ENCODE measurements at regions of chr20 and their contacts with region 1.

Region 1: DNA sequence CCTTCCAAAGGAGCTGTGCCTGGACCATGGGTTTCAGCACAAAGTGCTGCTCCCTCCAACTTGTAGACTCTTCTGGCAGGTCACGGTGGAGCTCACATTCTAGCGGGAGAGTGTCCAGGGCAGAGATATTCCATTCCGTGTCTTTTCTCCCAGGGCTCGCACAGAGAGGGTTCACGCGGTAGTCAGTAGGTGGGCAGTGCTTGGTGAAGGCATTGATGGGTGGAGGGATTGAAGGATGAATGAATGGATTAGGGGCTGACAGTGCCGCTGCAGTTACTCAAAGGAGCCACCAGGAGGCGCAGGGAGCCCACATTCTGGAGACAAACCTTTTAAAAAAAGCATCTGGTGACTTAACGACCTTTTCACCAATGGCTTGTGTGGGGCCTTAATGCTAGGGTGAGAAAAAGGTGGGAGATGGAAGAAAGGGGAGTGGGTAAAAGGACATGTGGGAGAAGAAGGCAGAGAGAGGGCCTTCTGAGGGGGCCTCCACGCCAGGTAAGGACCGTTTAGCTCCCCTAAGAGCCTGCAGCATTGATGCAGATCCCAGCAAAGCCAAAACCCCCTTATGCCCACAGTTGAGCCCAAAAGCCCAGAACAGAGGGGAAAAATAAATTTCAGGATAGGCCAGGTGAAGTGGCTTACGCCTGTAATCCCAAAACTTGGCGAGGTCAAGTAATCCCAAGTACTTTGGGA is 17.5 kb upstream of the FAM110A start:
- DNase-seq: peak; percentile 76 to 84
- ATAC-seq: peak; percentile 48 to 76; a peak in 4 of 6 replicates
- H3K4me3 ChIP-seq: no peak overlapping the region
- H3K27ac ChIP-seq: no peak overlapping the region
- H3K4me1 ChIP-seq: no peaks in the 10 kb centered on the region
- CTCF ChIP-seq: peak; percentile 98
- EP300 ChIP-seq: no peak
- POLR2A ChIP-seq: no peak
- RAD21 ChIP-seq: peak; percentile 97 to 98

Region 2: GRCh38 chr20:588932-589672 is 227.0 kb before region 1 on chr20:
- CTCF ChIA-PET with region 1: no interaction called
- POLR2A ChIA-PET with region 1: no interaction called
- DNase-seq: peak in 1 of 2 experiments; percentile 41
- ATAC-seq: peak; percentile 60 to 78; a peak in 4 of 6 replicates
- H3K4me3 ChIP-seq: no peak overlapping the region
- H3K27ac ChIP-seq: no peak overlapping the region
- H3K4me1 ChIP-seq: no peaks in the 10 kb centered on the region
- CTCF ChIP-seq: no peak
- EP300 ChIP-seq: no peak
- POLR2A ChIP-seq: no peak
- RAD21 ChIP-seq: no peak

Region 3: GRCh38 chr20:805713-806112 is 10.3 kb before region 1 on chr20:
- CTCF ChIA-PET with region 1: interaction called, 20 read pairs
- POLR2A ChIA-PET with region 1: no interaction called
- DNase-seq: peak in 1 of 2 experiments; percentile 59
- ATAC-seq: no peak
- H3K4me3 ChIP-seq: no peak overlapping the region
- H3K27ac ChIP-seq: no peak overlapping the region
- H3K4me1 ChIP-seq: no peaks in the 10 kb centered on the region
- CTCF ChIP-seq: no peak
- EP300 ChIP-seq: no peak
- POLR2A ChIP-seq: no peak
- RAD21 ChIP-seq: no peak

Region 4: DNA sequence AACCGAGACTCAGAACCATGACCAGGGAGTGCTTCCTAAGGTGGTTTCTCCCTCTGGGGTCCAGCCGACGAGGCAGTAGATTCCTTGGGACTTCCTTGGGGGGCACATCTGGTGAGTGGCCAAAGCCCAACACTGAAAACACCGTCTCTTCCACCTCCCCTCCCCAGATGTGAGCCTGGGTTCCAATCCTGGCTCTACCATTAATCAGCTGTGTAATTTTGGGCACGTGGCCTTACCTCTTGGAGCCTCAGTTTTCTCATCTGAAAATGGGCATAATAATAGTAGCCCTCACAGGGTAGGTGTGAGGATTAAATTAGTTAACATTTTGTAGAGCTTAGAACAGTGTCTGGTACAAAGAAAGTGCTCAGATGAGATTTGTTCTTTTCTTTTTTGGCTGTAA is 23.0 kb after region 1 on chr20:
- CTCF ChIA-PET with region 1: interaction called, 24 read pairs
- POLR2A ChIA-PET with region 1: no interaction called
- DNase-seq: no peak
- ATAC-seq: no peak
- H3K4me3 ChIP-seq: no peak overlapping the region
- H3K27ac ChIP-seq: no peak overlapping the region
- H3K4me1 ChIP-seq: peaks cover 11% of the 10 kb centered on the region; the same call in 2 of the 3 replicates
- CTCF ChIP-seq: no peak
- EP300 ChIP-seq: no peak
- POLR2A ChIP-seq: no peak
- RAD21 ChIP-seq: no peak

Region 5: DNA sequence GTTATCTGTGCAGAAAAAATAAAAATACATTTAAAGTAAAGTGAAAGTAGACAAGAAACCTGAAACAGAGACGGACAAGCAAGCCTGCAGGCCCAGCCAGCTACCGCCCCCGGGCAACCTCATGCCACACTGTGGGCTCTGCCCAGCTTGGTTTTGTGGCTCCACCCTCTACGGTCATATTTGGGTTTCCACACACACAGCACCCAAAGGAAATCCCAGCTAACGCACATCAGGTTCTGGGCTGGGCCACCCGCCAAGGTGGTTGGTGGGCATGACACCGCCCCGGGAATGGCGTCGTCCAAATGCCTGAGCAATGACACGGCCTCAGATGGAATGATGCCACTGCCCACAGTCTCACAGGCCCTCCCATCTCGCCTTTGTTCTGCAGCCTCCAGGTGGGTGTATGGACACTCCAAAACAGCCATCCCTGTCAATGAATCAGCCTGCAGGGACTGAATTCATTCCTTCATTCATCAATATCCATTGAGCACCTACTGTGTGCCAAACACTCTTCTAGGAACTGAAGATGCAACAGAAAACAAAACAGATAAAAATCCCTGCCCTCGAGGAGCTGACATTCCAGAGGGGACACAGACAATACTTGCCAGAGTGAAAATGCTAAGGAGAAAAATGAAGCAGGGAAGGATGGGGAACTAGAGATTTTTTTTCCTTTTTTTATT is 40.4 kb after region 1 on chr20:
- CTCF ChIA-PET with region 1: interaction called, 11 read pairs
- POLR2A ChIA-PET with region 1: no interaction called
- DNase-seq: peak; percentile 72 to 82
- ATAC-seq: peak; percentile 81 to 89
- H3K4me3 ChIP-seq: no peak overlapping the region
- H3K27ac ChIP-seq: peak overlapping the region; percentile 31 to 77; a peak in 4 of 6 replicates
- H3K4me1 ChIP-seq: peaks cover 14% of the 10 kb centered on the region
- CTCF ChIP-seq: no peak
- EP300 ChIP-seq: no peak
- POLR2A ChIP-seq: no peak
- RAD21 ChIP-seq: no peak

Region 6: DNA sequence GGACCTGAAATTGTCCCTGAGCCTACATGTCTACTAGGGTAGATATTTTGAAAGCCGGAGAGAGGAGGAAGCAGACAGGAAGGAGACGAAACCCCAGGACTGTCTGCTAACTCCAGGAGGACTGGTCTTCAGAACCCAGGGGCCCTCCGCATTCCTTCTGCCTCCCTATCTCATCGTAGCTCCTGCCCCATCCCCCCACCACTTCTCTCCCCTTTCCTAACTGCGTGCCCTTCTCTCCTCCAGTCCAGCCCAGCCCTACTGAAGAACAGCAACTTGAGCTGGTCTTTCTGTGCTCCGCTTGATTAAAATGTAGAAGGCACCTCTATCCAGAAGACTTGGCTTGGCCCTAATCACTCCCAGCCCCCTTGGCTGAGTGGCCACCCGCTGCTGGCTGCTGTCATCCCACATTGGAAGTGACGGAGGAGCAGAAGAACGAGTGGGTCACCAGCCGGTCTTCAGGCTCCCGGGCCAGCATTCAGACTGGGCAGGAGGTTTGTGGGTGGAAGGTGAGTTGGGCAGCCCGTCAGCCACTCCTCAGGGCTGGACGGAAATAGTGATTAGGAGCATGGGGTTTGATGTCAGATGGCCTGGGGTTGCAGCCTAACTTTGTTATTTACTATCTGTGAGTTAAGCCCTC is 128.8 kb after region 1 on chr20:
- CTCF ChIA-PET with region 1: interaction called, 872 read pairs
- POLR2A ChIA-PET with region 1: no interaction called
- DNase-seq: no peak
- ATAC-seq: no peak
- H3K4me3 ChIP-seq: no peak overlapping the region
- H3K27ac ChIP-seq: no peak overlapping the region
- H3K4me1 ChIP-seq: no peaks in the 10 kb centered on the region
- CTCF ChIP-seq: no peak
- EP300 ChIP-seq: no peak
- POLR2A ChIP-seq: no peak
- RAD21 ChIP-seq: no peak

Region 7: DNA sequence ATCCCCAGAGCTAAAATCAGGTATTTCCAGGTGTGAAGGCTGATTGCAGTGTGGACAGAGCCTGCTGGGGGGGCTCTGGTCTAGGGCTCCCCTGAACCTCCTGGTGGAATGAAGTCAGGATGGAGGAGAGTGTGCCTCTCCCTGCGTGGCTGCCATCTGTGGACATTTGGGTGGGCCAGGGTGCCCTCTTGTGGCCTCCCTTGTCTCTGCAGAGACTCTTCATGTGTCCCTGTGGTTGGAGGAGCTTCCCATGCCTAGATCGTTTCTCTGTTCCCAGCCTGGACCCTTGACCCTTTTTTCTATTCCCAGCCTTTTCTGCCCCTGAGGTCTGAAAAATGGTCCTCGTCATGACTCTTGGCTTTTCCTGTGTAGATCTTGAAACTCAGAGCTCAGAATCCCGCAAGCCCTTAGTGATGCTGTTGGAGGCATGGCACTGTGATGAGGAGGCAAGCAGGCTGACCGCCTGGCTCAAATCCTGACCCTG is 292.4 kb after region 1 on chr20:
- CTCF ChIA-PET with region 1: interaction called, 32 read pairs
- POLR2A ChIA-PET with region 1: no interaction called
- DNase-seq: peak; percentile 61 to 75
- ATAC-seq: peak; percentile 96 to 98
- H3K4me3 ChIP-seq: no peak overlapping the region
- H3K27ac ChIP-seq: no peak overlapping the region
- H3K4me1 ChIP-seq: no peaks in the 10 kb centered on the region
- CTCF ChIP-seq: peak; percentile 74
- EP300 ChIP-seq: no peak
- POLR2A ChIP-seq: no peak
- RAD21 ChIP-seq: peak; percentile 63 to 68

Region 8: DNA sequence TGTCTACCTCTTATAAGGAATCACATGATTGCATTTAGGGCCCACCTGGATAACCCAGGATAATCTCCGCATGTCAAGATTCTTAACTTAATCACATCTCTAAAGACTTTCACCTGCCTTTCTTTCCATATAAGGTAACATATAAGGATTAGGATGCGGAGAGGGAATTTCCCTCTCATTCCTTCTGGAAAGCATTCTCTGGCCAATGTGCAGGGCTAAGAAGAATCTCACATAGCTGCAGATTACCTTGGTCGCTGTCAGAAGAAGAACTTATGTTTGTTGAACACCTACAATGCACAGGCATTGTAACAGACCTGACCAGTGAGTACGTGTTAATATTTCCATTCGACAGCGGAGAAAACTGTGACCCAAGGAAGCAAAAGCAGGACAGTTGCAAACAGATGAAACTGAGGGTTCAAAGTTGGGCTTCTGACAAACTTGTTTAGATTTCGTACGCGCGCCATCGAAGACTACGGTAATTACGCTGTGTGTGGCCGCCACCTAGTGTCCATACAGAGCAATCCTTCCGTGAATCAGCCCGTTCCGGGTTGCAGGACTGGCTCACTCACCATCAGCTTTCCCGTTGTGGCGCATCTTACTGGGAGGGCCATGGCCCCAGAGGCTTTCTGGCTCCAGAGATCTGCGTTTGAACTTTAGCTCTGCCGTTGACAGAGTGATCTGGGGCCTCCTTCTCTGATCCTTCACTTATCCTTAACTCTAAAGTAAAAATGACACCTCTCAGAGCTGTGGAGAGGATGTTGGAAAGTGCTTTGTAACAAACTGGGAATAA is 396.7 kb after region 1 on chr20:
- CTCF ChIA-PET with region 1: interaction called, 81 read pairs
- POLR2A ChIA-PET with region 1: no interaction called
- DNase-seq: peak; percentile 82 to 83
- ATAC-seq: peak; percentile 96 to 99
- H3K4me3 ChIP-seq: no peak overlapping the region
- H3K27ac ChIP-seq: no peak overlapping the region
- H3K4me1 ChIP-seq: no peaks in the 10 kb centered on the region
- CTCF ChIP-seq: peak; percentile 92
- EP300 ChIP-seq: no peak
- POLR2A ChIP-seq: no peak
- RAD21 ChIP-seq: peak; percentile 89 to 91

Measured in A549 (cell line).